ENCODE measurements at regions of chr1 and their contacts with region 1.

Region 1: GRCh38 chr1:7401814-7402537 is 369.1 kb upstream of the VAMP3 start:
- DNase-seq: peak; percentile 94
- H3K4me3 ChIP-seq: no peak overlapping the region
- H3K27ac ChIP-seq: peak overlapping the region; percentile 32
- H3K4me1 ChIP-seq: peaks cover 9% of the 10 kb centered on the region
- H3K27me3 ChIP-seq: peaks cover 6 to 8% of the 10 kb centered on the region in 2 experiments
- CTCF ChIP-seq: no peak
- POLR2A ChIP-seq: no peak

Region 2: GRCh38 chr1:7235871-7236517 is 166.0 kb before region 1 on chr1:
- CTCF ChIA-PET with region 1: no interaction called
- POLR2A ChIA-PET with region 1: no interaction called
- dilution Hi-C with region 1: no loop called
- intact Hi-C with region 1: no loop called
- DNase-seq: no peak
- H3K4me3 ChIP-seq: no peak overlapping the region
- H3K27ac ChIP-seq: no peak overlapping the region
- H3K4me1 ChIP-seq: no peaks in the 10 kb centered on the region
- H3K27me3 ChIP-seq: no peaks in the 10 kb centered on the region
- CTCF ChIP-seq: no peak
- POLR2A ChIP-seq: no peak

Region 3: DNA sequence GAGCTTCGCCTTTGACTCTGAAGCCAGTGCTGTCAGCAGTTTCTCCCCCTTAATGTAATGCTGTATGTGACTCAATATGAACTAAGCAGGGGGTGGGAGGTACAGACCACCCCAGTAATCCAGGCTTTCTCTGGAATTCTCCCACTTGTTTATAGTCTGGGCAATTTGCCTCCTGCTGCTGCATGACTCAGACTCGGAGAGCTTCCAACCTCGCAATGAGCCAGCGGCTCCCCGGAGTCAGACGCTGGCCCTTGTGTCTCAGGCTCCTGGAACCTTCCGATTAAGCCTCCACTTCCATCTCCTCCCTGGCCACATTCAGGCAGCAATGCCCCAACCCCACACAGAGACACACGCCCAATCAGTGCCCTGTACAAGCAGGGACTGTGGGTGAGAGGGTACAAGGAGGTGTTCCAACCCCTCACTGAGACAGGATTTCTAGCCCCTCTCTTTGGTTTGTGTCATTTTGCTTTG is 102.6 kb before region 1 on chr1:
- CTCF ChIA-PET with region 1: no interaction called
- POLR2A ChIA-PET with region 1: no interaction called
- dilution Hi-C with region 1: no loop called
- intact Hi-C with region 1: loop called (anchors 1 kb)
- DNase-seq: peak; percentile 93
- H3K4me3 ChIP-seq: no peak overlapping the region
- H3K27ac ChIP-seq: peak overlapping the region; percentile 90
- H3K4me1 ChIP-seq: peaks cover 17% of the 10 kb centered on the region
- H3K27me3 ChIP-seq: no peaks in the 10 kb centered on the region
- CTCF ChIP-seq: no peak
- POLR2A ChIP-seq: no peak

Region 4: DNA sequence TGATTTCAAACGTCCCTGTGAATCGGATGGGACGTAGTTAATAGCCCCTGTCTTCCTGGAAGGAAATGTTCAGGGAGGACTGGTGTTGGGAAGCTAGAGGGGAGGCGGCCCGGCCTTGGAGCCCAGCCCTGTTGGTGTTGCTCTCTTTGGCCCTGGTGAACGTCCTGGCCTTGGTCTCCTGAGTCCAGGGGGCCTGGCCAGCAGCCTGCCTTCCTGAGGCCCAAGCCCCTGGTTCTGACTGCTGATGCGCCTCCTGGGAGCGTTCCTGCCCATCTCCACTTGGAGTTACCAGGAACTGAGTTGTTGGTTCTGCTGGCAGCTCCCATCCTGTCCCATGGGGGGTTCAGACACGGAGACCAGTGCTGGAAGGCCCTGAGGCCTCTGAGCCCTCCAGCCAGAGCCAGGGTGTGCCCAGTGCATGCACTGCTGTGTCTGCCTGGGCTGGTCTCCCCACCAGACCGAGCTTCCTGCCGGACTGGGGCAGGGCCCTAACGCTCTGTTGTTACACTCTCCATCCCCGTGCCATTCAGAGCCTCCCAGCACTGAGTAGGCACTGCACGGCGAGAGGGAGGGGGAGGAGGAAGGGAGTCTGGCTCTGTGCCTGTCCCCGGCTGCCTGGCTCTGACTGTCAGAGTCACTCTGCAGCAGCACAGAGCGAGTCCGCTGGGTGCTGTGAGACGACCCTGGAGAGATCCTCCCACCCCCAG is 13.3 kb before region 1 on chr1:
- CTCF ChIA-PET with region 1: interaction called, 3 read pairs
- POLR2A ChIA-PET with region 1: no interaction called
- dilution Hi-C with region 1: no loop called
- intact Hi-C with region 1: loop called (anchors 1 kb)
- DNase-seq: peak; percentile 51
- H3K4me3 ChIP-seq: no peak overlapping the region
- H3K27ac ChIP-seq: peak overlapping the region; percentile 1
- H3K4me1 ChIP-seq: peaks cover 14% of the 10 kb centered on the region
- H3K27me3 ChIP-seq: no peaks in the 10 kb centered on the region
- CTCF ChIP-seq: no peak
- POLR2A ChIP-seq: no peak

Region 5: GRCh38 chr1:7549277-7550161 is 147.5 kb after region 1 on chr1:
- CTCF ChIA-PET with region 1: no interaction called
- POLR2A ChIA-PET with region 1: no interaction called
- dilution Hi-C with region 1: no loop called
- intact Hi-C with region 1: loop called (anchors 5 kb)
- DNase-seq: peak; percentile 84
- H3K4me3 ChIP-seq: peak overlapping the region in 1 of 3 experiments; percentile 13
- H3K27ac ChIP-seq: peak overlapping the region; percentile 94
- H3K4me1 ChIP-seq: peaks cover 28% of the 10 kb centered on the region
- H3K27me3 ChIP-seq: no peaks in the 10 kb centered on the region
- CTCF ChIP-seq: no peak
- POLR2A ChIP-seq: no peak

Measured in endothelial cell of umbilical vein (primary cell).